ENCODE measurements at regions of chr1 and their contacts with region 1.

Region 1: DNA sequence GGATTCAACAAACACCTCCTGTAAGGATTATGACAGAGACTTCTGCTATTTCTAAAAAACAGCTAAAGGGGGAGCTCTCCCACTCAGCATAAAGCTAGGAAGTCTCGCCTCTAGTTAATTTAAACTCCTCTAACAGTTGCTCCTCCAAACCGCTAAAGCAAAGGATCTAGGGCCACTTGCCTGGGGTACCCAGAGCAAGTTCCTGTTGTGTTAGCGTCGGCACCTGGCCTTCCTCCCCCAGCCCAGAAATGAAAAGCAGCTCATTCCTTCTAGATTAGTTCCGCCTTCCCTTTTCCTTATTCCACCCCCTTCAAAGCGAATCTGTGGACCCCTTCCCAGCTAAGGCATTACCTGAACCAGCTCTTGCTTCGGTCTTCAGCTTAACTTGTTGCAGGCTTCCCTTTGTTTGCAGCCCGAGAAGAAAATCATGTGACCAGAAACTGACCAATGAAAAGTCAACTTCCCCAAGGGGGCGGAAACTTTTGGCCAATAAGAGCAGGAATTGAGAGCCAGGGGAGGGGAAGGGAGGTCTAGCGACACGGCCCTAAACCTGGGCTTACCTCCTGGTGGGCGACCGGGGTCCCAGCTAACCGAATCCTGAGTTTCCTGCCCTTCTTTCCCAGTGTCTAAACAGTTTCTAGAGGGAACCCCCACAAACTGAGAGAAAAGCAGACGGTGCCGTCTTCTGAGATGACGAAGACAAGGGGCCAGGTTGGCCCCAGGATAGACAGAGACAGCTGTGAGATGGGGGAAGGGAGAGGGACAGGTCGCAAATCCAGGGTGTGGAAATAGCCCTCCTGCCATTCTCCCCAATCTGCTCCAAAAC is at the start of gene PBXIP1:
- DNase-seq: peak; percentile 64 to 95 (median 78)
- ATAC-seq: peak; percentile 40
- H3K4me3 ChIP-seq: peak within 1 kb of the TSS; percentile 69
- H3K4me3 Mint-ChIP-seq: peak within 1 kb of the TSS; percentile 95
- H3K27ac ChIP-seq: peak within 1 kb of the TSS; percentile 100
- H3K27ac Mint-ChIP-seq: peak within 1 kb of the TSS; percentile 96
- H3K4me1 ChIP-seq: peaks cover 96% of the 10 kb centered on the region
- H3K4me1 Mint-ChIP-seq: peaks cover 57% of the 10 kb centered on the region
- H3K27me3 ChIP-seq: no peaks in the 10 kb centered on the region
- H3K27me3 Mint-ChIP-seq: no peaks in the 10 kb centered on the region
- CTCF ChIP-seq: peak; percentile 40
- total RNA-seq, gene PBXIP1: 434 to 440 TPM

Region 2: DNA sequence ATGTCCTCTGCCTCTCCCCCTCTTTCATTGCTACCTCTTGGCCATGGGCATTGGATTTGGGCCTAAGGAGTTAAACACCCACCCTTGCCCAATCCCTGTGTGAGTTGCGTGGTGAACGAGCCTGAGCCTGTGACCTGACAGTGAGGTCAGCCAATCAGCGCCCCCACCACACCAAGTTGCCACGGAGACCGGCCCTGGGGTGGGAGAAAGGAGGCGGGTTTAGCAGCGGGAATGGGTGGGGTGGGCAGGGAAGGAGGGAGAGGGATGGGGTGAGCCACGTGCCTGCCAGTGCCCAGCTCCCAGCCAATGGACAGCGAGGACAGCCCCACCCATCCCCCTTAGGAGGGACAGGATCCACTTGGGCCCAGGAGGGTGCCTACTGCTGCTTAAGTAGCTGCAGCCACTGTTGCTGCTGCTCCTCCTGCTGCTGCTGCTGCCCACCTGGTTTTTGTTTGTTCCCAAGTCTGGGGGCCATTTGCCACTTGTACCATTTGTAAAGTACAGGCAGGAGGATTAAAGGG is 56.2 kb after region 1 on chr1:
- CTCF ChIA-PET with region 1: interaction called, 62 read pairs
- POLR2A ChIA-PET with region 1: interaction called, 72 read pairs
- intact Hi-C with region 1: loop called in 1 of 2 experiments (anchors 2 kb)
- DNase-seq: peak in 4 of 14 experiments; percentile 42 to 58 (median 51)
- ATAC-seq: no peak
- H3K4me3 ChIP-seq: peak overlapping the region; percentile 89
- H3K4me3 Mint-ChIP-seq: peak overlapping the region; percentile 91
- H3K27ac ChIP-seq: peak overlapping the region; percentile 87 to 88
- H3K27ac Mint-ChIP-seq: peak overlapping the region; percentile 92
- H3K4me1 ChIP-seq: peaks cover 99% of the 10 kb centered on the region
- H3K4me1 Mint-ChIP-seq: peaks cover 80% of the 10 kb centered on the region
- H3K27me3 ChIP-seq: no peaks in the 10 kb centered on the region
- H3K27me3 Mint-ChIP-seq: no peaks in the 10 kb centered on the region
- CTCF ChIP-seq: no peak